Activated CD8-positive, alpha-beta T cell treated with anti-CD3 and anti-CD28 coated beads, Interleukin-2, amount 10 ng/mL, durations not matched to agents 7 days and 5 days (primary cell): ENCODE measurements at regions of chr7 and their contacts with region 1.

Region 1: GRCh38 chr7:2863461-2864066 is 19.5 kb upstream of the GNA12 start:
- DNase-seq: peak; percentile 90
- ATAC-seq: peak; percentile 91
- H3K4me3 Mint-ChIP-seq: peak overlapping the region; percentile 64
- H3K27ac Mint-ChIP-seq: peak overlapping the region; percentile 86
- H3K4me1 Mint-ChIP-seq: peaks cover 28% of the 10 kb centered on the region
- H3K27me3 Mint-ChIP-seq: peaks cover 12% of the 10 kb centered on the region

Region 2: DNA sequence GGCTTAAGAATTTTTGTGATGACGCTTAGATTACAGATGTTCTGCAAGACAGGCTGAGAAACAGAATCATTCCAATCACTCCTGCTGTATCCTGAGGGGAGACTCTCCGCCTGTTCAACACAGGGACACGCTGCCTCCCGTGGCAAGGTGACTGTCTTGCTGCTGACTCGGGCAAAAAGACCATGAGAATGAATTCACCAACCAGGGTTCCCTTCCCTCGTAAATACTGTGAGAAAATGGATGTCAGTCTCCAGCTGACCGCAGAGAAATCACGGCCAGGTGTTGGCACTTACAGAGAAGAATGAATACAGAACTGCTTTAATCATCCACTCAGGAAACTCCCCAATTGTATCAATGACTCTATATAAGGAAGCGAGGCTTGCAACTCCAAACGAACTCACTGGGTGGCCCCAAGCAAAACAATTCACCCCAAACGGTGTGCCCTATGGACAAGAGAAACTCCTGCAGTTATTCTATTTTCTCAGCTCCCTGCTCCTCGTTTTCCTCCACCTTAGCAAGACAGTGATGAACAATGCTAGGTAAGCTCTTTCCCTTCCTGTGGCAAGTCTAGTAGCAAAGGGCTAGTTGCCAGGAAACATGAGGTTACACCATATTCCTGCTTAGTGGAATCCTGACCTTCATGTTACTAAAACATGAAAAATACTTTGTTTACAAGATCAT is 42.3 kb before region 1 on chr7:
- CTCF ChIA-PET with region 1: no interaction called
- POLR2A ChIA-PET with region 1: no interaction called
- DNase-seq: no peak
- ATAC-seq: no peak
- H3K4me3 Mint-ChIP-seq: no peak overlapping the region
- H3K27ac Mint-ChIP-seq: no peak overlapping the region
- H3K4me1 Mint-ChIP-seq: peaks cover 16% of the 10 kb centered on the region
- H3K27me3 Mint-ChIP-seq: no peaks in the 10 kb centered on the region

Region 3: GRCh38 chr7:2851497-2851896 is 12.1 kb before region 1 on chr7:
- CTCF ChIA-PET with region 1: interaction called, 23 read pairs
- POLR2A ChIA-PET with region 1: interaction called, 4 read pairs
- DNase-seq: peak; percentile 34
- ATAC-seq: peak; percentile 89
- H3K4me3 Mint-ChIP-seq: no peak overlapping the region
- H3K27ac Mint-ChIP-seq: no peak overlapping the region
- H3K4me1 Mint-ChIP-seq: peaks cover 6% of the 10 kb centered on the region
- H3K27me3 Mint-ChIP-seq: peaks cover 3% of the 10 kb centered on the region

Region 4: DNA sequence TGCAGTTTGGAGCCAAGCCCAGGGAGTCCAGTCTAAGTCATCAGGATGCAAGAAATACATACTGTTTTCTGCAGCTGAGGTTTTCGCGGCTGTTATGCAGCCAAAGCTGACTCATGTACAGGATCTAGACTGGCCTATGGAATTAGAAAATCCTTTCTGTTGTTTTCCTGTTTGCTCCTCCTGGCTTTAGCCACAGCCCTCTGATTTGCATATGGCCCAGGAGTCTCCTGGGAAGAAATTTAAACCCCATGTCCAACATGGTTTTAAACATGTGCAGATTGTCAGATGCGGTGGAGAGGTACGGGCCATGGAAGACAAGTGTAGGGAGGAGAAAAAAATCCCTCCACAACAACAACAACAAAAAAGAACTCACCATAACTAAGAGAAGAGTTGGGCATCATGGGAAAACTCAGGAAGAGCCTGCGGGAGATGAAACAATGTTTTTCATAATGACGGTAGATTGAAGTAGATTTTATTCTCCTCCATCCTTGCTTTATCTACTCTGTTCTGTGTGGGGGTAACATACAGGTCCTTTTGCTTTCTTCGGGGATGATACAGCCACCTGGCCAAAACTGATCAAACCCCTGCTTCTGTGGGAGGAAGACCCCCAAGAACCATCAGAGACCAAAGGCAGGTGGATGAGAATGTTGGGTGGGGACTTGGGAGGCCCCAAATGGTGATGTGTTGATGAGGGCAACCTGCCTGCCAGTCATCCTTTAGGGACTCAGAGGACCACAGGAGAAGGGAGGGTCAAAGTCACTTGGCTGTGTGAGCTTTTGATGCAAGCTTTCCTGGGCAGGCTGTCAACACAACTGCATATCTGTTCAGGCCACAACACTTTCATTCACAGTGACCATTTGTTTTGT is 10.4 kb after region 1 on chr7:
- CTCF ChIA-PET with region 1: interaction called, 15 read pairs
- POLR2A ChIA-PET with region 1: no interaction called
- DNase-seq: no peak
- ATAC-seq: no peak
- H3K4me3 Mint-ChIP-seq: no peak overlapping the region
- H3K27ac Mint-ChIP-seq: peak overlapping the region; percentile 74
- H3K4me1 Mint-ChIP-seq: peaks cover 47% of the 10 kb centered on the region
- H3K27me3 Mint-ChIP-seq: peaks cover 2% of the 10 kb centered on the region

Region 5: DNA sequence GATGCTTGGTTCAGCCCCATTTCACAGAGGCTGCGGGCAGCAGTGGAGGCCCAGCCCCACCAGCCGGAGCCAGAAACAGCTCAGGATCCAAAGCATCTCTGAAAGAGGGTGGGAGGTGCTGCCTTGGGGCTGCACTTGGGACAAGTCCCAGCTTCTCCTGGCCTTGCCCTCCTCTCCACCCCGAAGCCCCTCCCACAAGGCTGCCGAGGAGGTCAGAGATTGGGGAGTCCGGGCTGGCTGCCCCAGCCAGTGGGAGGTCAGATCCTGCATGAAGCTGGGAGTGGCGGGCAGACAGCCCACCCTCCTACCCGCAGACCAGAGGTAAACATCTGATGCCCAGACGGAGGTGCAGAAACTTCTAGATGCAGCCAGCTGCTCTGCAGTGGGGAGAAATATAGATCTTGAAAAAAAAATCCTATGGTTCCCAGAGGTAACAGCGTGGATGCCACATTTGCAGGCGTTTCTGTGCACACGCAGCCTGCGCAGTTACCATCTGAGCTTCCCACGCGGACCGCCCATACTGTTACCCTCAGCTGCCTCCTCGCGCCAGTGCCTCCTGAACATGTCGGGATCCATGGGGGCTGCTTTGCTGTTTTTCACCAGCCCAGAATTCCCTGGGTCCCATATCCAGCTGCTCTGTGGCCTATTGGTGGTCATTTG is 17.4 kb after region 1 on chr7:
- CTCF ChIA-PET with region 1: interaction called, 15 read pairs
- POLR2A ChIA-PET with region 1: no interaction called
- DNase-seq: no peak
- ATAC-seq: no peak
- H3K4me3 Mint-ChIP-seq: no peak overlapping the region
- H3K27ac Mint-ChIP-seq: no peak overlapping the region
- H3K4me1 Mint-ChIP-seq: peaks cover 18% of the 10 kb centered on the region
- H3K27me3 Mint-ChIP-seq: peaks cover 2% of the 10 kb centered on the region

Region 6: GRCh38 chr7:3042861-3043489 is 179.4 kb after region 1 on chr7:
- CTCF ChIA-PET with region 1: interaction called, 12 read pairs
- POLR2A ChIA-PET with region 1: no interaction called
- DNase-seq: peak; percentile 87
- ATAC-seq: peak; percentile 85
- H3K4me3 Mint-ChIP-seq: peak overlapping the region; percentile 98
- H3K27ac Mint-ChIP-seq: peak overlapping the region; percentile 94
- H3K4me1 Mint-ChIP-seq: peaks cover 61% of the 10 kb centered on the region
- H3K27me3 Mint-ChIP-seq: no peaks in the 10 kb centered on the region

Region 7: DNA sequence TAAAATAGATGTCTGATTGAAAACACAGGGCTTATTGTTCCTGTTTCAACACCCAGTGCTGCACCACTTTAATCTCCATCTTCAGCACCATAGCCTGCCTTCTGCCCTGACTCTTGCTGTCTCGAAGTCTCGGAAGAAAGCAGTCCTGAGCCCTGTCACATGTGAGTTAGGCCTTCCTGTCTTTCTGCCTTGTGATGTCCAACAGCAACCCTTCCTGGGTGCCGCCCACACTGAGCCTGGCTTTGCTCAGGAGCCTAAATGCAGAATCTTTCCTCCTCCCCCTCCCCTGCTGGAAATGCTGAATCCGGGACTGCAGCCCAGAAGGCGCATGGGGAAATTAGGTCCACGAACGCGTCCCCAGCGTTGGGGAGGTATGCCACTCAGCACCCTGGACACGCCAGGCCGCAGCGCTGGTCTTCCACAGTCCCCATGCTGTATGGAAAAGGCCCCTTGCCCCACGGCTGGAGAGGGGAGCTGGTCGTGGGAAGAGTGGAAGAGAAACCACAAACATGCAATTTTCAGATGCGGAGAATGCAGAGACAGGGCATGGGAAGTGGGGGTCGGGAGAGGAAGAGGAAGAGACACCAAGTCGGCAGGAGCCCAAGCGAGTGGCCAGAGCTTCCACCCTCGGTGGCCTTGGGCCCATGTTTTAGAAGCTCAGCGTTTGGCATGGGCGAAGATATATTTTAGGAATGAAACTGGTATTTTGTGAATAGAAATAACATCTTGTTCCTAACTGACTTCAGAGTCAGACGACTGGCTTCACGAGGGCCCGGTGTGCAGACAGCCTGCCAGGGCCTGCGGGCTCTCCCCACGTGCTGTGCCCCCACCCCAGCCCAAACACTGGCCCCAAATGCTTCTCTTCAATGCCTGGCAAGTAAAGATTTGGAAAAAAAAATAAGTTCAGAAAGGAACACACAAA is 1162.4 kb after region 1 on chr7:
- CTCF ChIA-PET with region 1: no interaction called
- POLR2A ChIA-PET with region 1: no interaction called
- DNase-seq: no peak
- ATAC-seq: no peak
- H3K4me3 Mint-ChIP-seq: no peak overlapping the region
- H3K27ac Mint-ChIP-seq: no peak overlapping the region
- H3K4me1 Mint-ChIP-seq: no peaks in the 10 kb centered on the region
- H3K27me3 Mint-ChIP-seq: no peaks in the 10 kb centered on the region